ENCODE measurements at regions of chr2 and their contacts with region 1.

Region 1: GRCh38 chr2:38750891-38751595 is at the start of gene SRSF7:
- DNase-seq: peak; percentile 99 to 100
- ATAC-seq: peak; percentile 87 to 90
- H3K4me3 ChIP-seq: peak within 1 kb of the TSS; percentile 84
- H3K27ac ChIP-seq: peak within 1 kb of the TSS; percentile 96 to 98
- H3K4me1 ChIP-seq: peaks cover 40% of the 10 kb centered on the region
- CTCF ChIP-seq: no peak
- EP300 ChIP-seq: no peak
- POLR2A ChIP-seq: peak; percentile 100
- RAD21 ChIP-seq: 0 out of 5 replicates have a peak, but pooled peaks of 1 of the 2 experiments have one; percentile 17
- polyA plus RNA-seq, gene SRSF7: 356 and 544 TPM in 2 replicates

Region 2: DNA sequence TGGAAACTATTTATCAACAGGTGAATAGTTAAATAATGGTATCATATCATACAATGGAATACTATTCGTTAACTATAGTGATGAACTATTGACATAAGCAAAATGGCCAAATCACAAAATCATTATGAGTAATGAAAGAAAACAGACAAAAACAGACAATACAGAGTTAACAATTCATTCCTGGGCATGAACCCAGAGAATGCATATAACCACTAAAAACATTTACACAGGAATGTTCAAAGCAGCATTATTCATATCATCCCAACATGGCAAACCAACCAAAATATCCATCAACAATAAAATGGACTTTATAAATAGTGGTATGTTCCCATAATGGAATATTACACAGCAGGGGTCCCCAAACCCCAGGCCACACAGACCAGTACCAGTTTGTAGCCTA is 543.9 kb before region 1 on chr2:
- CTCF ChIA-PET with region 1: no interaction called
- POLR2A ChIA-PET with region 1: no interaction called
- DNase-seq: no peak
- ATAC-seq: no peak
- H3K4me3 ChIP-seq: no peak overlapping the region
- H3K27ac ChIP-seq: no peak overlapping the region
- H3K4me1 ChIP-seq: no peaks in the 10 kb centered on the region
- CTCF ChIP-seq: no peak
- EP300 ChIP-seq: no peak
- POLR2A ChIP-seq: no peak
- RAD21 ChIP-seq: no peak

Region 3: GRCh38 chr2:38264396-38265281 is 486.4 kb before region 1 on chr2:
- CTCF ChIA-PET with region 1: no interaction called
- POLR2A ChIA-PET with region 1: no interaction called
- DNase-seq: no peak
- ATAC-seq: no peak
- H3K4me3 ChIP-seq: no peak overlapping the region
- H3K27ac ChIP-seq: no peak overlapping the region
- H3K4me1 ChIP-seq: no peaks in the 10 kb centered on the region
- CTCF ChIP-seq: no peak
- EP300 ChIP-seq: no peak
- POLR2A ChIP-seq: no peak
- RAD21 ChIP-seq: no peak

Region 4: GRCh38 chr2:38293152-38293865 is 457.7 kb before region 1 on chr2:
- CTCF ChIA-PET with region 1: no interaction called
- POLR2A ChIA-PET with region 1: no interaction called
- DNase-seq: no peak
- ATAC-seq: peak in 1 of 2 experiments; percentile 27; a peak in 3 of 6 replicates
- H3K4me3 ChIP-seq: no peak overlapping the region
- H3K27ac ChIP-seq: no peak overlapping the region
- H3K4me1 ChIP-seq: no peaks in the 10 kb centered on the region
- CTCF ChIP-seq: no peak
- EP300 ChIP-seq: no peak
- POLR2A ChIP-seq: no peak
- RAD21 ChIP-seq: no peak

Region 5: GRCh38 chr2:38528008-38528442 is 223.0 kb before region 1 on chr2:
- CTCF ChIA-PET with region 1: interaction called, 3 read pairs
- POLR2A ChIA-PET with region 1: interaction called, 26 read pairs
- DNase-seq: peak; percentile 68 to 73
- ATAC-seq: peak; percentile 86 to 91
- H3K4me3 ChIP-seq: peak overlapping the region; percentile 45
- H3K27ac ChIP-seq: peak overlapping the region; percentile 60 to 86
- H3K4me1 ChIP-seq: peaks cover 6% of the 10 kb centered on the region; the same call in 1 of the 3 replicates
- CTCF ChIP-seq: 0 out of 3 replicates have a peak, but pooled peaks have one; percentile 23
- EP300 ChIP-seq: no peak
- POLR2A ChIP-seq: no peak
- RAD21 ChIP-seq: peak; percentile 39 to 48; a peak in 4 of 5 replicates

Region 6: DNA sequence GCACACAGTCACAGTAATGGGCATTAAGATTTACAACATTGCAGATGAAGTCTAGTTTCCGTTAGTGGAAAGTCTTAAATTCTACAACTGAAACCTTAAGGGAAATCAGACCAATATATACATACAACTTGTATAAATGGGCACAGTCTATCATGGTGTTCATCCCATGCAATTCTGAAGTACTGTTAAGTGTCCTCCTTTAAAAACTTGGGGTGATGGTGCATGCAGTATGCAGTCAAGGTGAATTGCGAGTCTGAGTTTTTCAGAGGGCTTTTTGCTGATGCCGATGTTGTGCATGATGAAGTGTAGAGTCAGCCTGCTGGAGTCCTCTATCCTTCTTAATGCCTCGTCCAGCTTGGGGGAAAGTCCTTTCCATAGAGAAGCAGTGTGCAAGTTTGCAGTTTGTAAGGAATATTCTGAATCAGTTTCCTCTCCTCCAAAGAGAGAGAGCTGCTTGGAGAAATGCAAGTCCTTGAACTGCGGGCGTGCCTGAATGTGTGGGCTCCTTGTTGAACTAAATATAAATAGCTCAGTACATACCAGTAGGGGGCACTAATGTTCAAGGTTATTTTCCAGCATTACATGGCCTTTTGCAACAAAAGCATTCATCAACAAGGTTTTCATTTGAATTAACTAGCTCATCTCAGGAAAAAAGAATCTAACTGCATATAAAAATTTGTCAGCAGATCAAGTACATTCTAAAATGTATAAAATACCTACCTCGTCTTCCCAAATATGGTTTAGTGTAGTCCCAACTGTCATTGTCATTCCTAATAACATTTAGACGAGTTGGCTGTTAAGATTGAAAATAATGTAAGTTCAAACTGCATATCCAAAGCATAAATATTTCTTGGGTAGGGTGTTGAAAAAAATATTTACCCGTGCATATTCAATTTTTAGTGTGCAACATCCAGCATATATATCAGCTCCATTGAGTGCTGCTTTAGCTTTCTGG is 169.6 kb before region 1 on chr2:
- CTCF ChIA-PET with region 1: interaction called, 9 read pairs
- POLR2A ChIA-PET with region 1: interaction called, 57 read pairs
- DNase-seq: peak in 1 of 2 experiments; percentile 83
- ATAC-seq: peak; percentile 91 to 97
- H3K4me3 ChIP-seq: no peak overlapping the region
- H3K27ac ChIP-seq: no peak overlapping the region
- H3K4me1 ChIP-seq: peaks cover 3% of the 10 kb centered on the region; the same call in 1 of the 3 replicates
- CTCF ChIP-seq: peak; percentile 94
- EP300 ChIP-seq: no peak
- POLR2A ChIP-seq: no peak
- RAD21 ChIP-seq: peak; percentile 89 to 91

Region 7: GRCh38 chr2:38658613-38659012 is 92.4 kb before region 1 on chr2:
- CTCF ChIA-PET with region 1: no interaction called
- POLR2A ChIA-PET with region 1: no interaction called
- DNase-seq: no peak
- ATAC-seq: no peak
- H3K4me3 ChIP-seq: no peak overlapping the region
- H3K27ac ChIP-seq: no peak overlapping the region
- H3K4me1 ChIP-seq: no peaks in the 10 kb centered on the region
- CTCF ChIP-seq: no peak
- EP300 ChIP-seq: no peak
- POLR2A ChIP-seq: no peak
- RAD21 ChIP-seq: no peak

Region 8: DNA sequence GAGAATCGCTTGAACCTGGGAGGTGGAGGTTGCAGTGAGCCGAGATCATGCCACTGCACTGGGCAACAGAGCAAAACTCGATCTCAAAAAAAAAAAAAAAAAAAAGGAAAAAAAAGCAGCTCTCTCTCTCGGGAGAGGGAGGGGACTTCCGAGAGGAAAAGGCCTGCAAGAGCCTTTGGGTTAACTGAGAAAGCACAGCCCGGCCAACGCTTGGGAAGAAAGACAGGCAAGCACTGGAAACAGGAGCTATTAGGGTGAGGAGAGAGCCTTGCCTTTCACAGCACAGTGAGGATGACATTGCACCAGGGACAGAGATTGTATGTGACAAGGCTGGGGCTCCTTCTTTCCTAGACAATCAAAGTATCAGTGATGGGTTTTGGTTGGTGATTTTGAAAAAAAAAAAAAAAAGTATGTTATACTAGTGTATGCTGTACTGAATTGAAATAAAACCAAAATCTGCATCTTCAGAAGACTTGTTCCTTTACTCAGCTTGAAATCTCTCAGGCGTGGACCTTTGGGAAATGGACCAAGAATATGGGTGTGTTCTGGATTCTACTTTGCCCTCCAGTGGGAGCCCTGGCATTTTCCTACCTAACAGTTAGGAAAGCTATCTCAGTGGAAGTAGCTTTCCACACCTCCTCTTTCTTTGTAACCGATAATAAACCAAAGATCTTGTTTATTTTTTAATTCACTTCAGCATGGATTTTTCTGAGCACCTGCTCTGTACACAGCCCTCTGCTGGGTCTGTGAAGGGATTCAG is 16.6 kb before region 1 on chr2:
- CTCF ChIA-PET with region 1: interaction called, 3 read pairs
- POLR2A ChIA-PET with region 1: interaction called, 90 read pairs
- DNase-seq: no peak
- ATAC-seq: peak in 1 of 2 experiments; percentile 16; a peak in 2 of 6 replicates
- H3K4me3 ChIP-seq: no peak overlapping the region
- H3K27ac ChIP-seq: no peak overlapping the region
- H3K4me1 ChIP-seq: no peaks in the 10 kb centered on the region
- CTCF ChIP-seq: no peak
- EP300 ChIP-seq: no peak
- POLR2A ChIP-seq: no peak
- RAD21 ChIP-seq: no peak

Region 9: DNA sequence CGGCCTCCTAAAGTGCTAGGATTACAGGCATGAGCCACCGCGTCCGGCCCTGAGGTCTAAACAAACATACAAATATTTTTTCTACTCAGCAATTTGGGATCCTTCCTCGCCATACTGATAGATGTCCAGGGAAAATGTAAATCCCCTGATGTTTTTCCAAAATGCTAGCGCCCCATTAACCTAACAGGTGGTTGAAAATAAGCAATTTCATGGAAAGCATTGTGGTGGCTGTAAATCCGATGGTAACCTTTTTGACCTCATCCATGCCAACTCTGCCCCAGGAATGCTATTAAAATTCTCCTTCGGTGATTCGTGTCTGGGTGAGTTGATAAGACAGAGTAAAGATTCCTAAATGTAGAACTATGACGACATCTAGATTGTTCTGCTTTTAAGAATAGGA is 46.2 kb after region 1 on chr2:
- CTCF ChIA-PET with region 1: interaction called, 4 read pairs
- POLR2A ChIA-PET with region 1: interaction called, 38 read pairs
- DNase-seq: peak; percentile 30 to 77
- ATAC-seq: peak; percentile 50 to 84; a peak in 4 of 6 replicates
- H3K4me3 ChIP-seq: no peak overlapping the region
- H3K27ac ChIP-seq: peak overlapping the region in 1 of 2 experiments; percentile 28; a peak in 4 of 6 replicates
- H3K4me1 ChIP-seq: peaks cover 28% of the 10 kb centered on the region
- CTCF ChIP-seq: no peak
- EP300 ChIP-seq: no peak
- POLR2A ChIP-seq: no peak
- RAD21 ChIP-seq: no peak

Region 10: GRCh38 chr2:38875576-38876367 is 124.7 kb after region 1 on chr2 and contains the starts of genes DHX57 and MORN2:
- CTCF ChIA-PET with region 1: no interaction called
- POLR2A ChIA-PET with region 1: interaction called, 17 read pairs
- DNase-seq: peak; percentile 88 to 98
- ATAC-seq: peak; percentile 99 to 100
- H3K4me3 ChIP-seq: peak within 1 kb of the TSS; percentile 74
- H3K27ac ChIP-seq: peak within 1 kb of the TSS; percentile 80 to 90
- H3K4me1 ChIP-seq: peaks cover 9% of the 10 kb centered on the region
- CTCF ChIP-seq: no peak
- EP300 ChIP-seq: no peak
- POLR2A ChIP-seq: peak; percentile 79
- RAD21 ChIP-seq: no peak; a peak in 1 of 5 replicates
- polyA plus RNA-seq, gene DHX57: 31.8 and 36.8 TPM in 2 replicates
- polyA plus RNA-seq, gene MORN2: 32.5 and 54.7 TPM in 2 replicates